Heart left ventricle (tissue), 16 donors: ENCODE measurements at regions of chr18 and their contacts with region 1.

Region 1: DNA sequence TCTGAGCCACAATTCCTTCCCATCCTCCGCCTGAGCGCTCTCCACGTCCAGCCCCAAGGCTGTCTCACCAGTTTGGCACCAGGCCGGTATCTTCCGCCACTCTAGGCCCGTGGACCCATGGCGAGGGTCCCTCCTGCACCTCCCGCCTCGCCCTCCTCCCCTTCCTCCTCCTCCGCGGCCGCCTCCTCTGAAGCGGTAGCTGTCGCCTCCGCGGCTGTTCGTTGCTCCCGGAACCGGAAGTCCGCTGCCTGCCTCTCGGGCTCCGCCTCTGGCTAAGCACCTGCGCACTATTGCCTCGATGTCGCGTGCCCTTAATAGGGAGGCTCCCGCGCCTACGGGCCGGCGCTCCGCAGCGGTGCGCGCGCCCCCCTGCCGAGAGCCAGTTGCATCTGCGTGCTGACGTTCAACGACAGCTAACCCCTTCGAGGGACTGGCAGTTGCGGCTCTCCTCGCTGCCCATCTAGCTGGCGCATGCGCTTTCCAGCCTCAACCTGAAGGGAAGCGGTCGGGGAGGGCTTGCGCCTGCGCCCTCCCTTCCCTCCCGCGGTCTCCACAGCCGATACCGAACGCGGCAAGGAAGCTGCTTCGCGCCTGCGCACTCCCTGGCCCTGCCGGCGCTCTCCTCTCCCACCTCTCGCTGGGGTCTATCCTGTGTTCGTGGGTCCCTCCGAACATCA is at the start of gene MBD1:
- DNase-seq: peak; percentile 97 to 99 (median 99)
- ATAC-seq: peak; percentile 96 to 97 (median 96)
- H3K4me3 ChIP-seq: peak within 1 kb of the TSS; percentile 62 to 99 (median 87)
- H3K27ac ChIP-seq: peak within 1 kb of the TSS; percentile 41 to 96 (median 92)
- H3K4me1 ChIP-seq: peaks cover 3 to 36% (median 23%) of the 10 kb centered on the region in 12 donors
- H3K27me3 ChIP-seq: no peaks in the 10 kb centered on the region
- CTCF ChIP-seq: peak in 10 of 12 donors; percentile 23 to 61 (median 36)
- POLR2A ChIP-seq: peak in 1 of 2 donors; percentile 79
- total RNA-seq, gene MBD1: 43.9 to 87.7 (median 51.4) TPM

Region 2: GRCh38 chr18:49565612-49566011 is 715.8 kb before region 1 on chr18:
- intact Hi-C with region 1: no loop called
- DNase-seq: peak in 4 of 5 donors; percentile 44 to 68 (median 56)
- ATAC-seq: peak; percentile 54 to 81 (median 66)
- H3K4me3 ChIP-seq: no peak overlapping the region
- H3K27ac ChIP-seq: no peak overlapping the region
- H3K4me1 ChIP-seq: peaks cover 3 to 33% (median 19%) of the 10 kb centered on the region in 12 donors
- H3K27me3 ChIP-seq: peaks cover 12 to 37% (median 23%) of the 10 kb centered on the region in 9 donors
- CTCF ChIP-seq: no peak
- POLR2A ChIP-seq: no peak

Region 3: GRCh38 chr18:49813319-49814146 is 467.9 kb before region 1 on chr18 and contains the start of gene ACAA2:
- intact Hi-C with region 1: loop called in 2 of 10 experiments (anchors 5 kb)
- DNase-seq: peak; percentile 91 to 95 (median 91)
- ATAC-seq: peak; percentile 92 to 97 (median 95)
- H3K4me3 ChIP-seq: peak within 1 kb of the TSS; percentile 71 to 96 (median 86)
- H3K27ac ChIP-seq: peak within 1 kb of the TSS; percentile 82 to 100 (median 97)
- H3K4me1 ChIP-seq: peaks cover 0 to 28% (median 15%) of the 10 kb centered on the region in 12 donors
- H3K27me3 ChIP-seq: no peaks in the 10 kb centered on the region
- CTCF ChIP-seq: no peak
- POLR2A ChIP-seq: peak; percentile 25 to 73
- total RNA-seq, gene ACAA2: 165 to 379 (median 261) TPM

Region 4: GRCh38 chr18:50266248-50266704 is 15.2 kb before region 1 on chr18 and contains the start of gene CFAP53:
- intact Hi-C with region 1: loop called in 3 of 10 experiments (anchors 1 to 2 kb)
- DNase-seq: peak; percentile 94 to 97 (median 96)
- ATAC-seq: peak; percentile 95 to 98 (median 98)
- H3K4me3 ChIP-seq: peak within 1 kb of the TSS; percentile 40 to 83 (median 68)
- H3K27ac ChIP-seq: peak within 1 kb of the TSS in 10 of 12 donors; percentile 6 to 57 (median 20)
- H3K4me1 ChIP-seq: peaks cover 4 to 32% (median 14%) of the 10 kb centered on the region in 12 donors
- H3K27me3 ChIP-seq: no peaks in the 10 kb centered on the region
- CTCF ChIP-seq: no peak
- POLR2A ChIP-seq: peak in 1 of 2 donors; percentile 39
- total RNA-seq, gene CFAP53: 0.14 to 0.62 (median 0.16) TPM in 3 of 9 donors, not detected in the others